ENCODE measurements at regions of chr18 and their contacts with region 1.

Region 1: DNA sequence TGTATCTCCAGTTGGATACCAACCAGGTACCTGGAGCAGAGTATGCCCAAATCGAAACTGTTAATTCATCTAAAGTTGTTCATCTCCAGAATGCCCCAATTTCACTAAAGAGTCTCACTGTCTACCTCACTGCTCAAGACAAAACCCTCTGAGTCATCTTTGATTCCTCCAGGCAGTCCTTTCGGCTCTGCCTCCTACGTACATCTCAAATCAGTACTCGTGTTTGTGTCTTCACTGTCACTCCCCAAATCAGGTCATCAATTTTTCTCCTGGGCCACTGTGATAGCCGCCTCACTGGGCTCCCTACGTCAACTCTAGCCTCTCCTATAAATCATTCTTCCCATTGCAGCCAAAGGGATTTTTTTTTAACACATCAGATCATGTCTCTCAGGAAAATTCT is 42.1 kb upstream of the TTC39C start:
- DNase-seq: no peak
- H3K4me3 ChIP-seq: no peak overlapping the region
- H3K27ac ChIP-seq: no peak overlapping the region
- H3K4me1 ChIP-seq: no peaks in the 10 kb centered on the region
- H3K27me3 ChIP-seq: no peaks in the 10 kb centered on the region
- CTCF ChIP-seq: no peak

Region 2: GRCh38 chr18:23918401-23919032 is 53.9 kb before region 1 on chr18:
- intact Hi-C with region 1: no loop called
- DNase-seq: peak in 4 of 5 donors; percentile 69 to 94 (median 82)
- H3K4me3 ChIP-seq: no peak overlapping the region
- H3K27ac ChIP-seq: no peak overlapping the region
- H3K4me1 ChIP-seq: no peaks in the 10 kb centered on the region
- H3K27me3 ChIP-seq: no peaks in the 10 kb centered on the region
- CTCF ChIP-seq: peak; percentile 85

Region 3: GRCh38 chr18:24031916-24032315 is 59.5 kb after region 1 on chr18:
- intact Hi-C with region 1: loop called (anchors 10 kb)
- DNase-seq: no peak
- H3K4me3 ChIP-seq: no peak overlapping the region
- H3K27ac ChIP-seq: no peak overlapping the region
- H3K4me1 ChIP-seq: no peaks in the 10 kb centered on the region
- H3K27me3 ChIP-seq: no peaks in the 10 kb centered on the region
- CTCF ChIP-seq: no peak

Measured in kidney (tissue), 22 donors.